Mammary epithelial cell (primary cell): ENCODE measurements at regions of chr1 and their contacts with region 1.

Region 1: DNA sequence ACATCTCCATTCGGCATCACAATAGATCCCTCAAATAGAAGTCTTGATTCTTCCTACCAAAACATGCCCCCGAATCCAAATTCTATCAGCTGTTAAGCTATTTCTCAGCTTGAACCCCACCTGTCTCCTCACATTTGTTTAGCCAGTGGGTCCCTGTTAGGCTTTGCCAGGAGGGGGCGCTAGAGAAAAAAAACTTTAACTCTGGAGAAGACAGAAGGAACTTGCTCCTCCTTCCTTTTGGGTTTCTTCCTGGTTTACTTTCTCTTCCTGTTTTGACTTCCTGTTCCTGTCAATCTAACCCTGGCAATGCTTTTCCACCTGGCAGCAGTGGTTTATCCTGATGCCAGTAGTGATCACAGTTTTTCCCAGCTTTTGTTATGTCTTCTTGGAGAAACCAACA is 95.6 kb upstream of the KCNK1 start:
- DNase-seq: peak; percentile 54
- H3K4me3 ChIP-seq: no peak overlapping the region
- H3K27ac ChIP-seq: no peak overlapping the region
- H3K4me1 ChIP-seq: peaks cover 22% of the 10 kb centered on the region
- H3K27me3 ChIP-seq: peaks cover 2% of the 10 kb centered on the region
- CTCF ChIP-seq: peak; percentile 67 to 74

Region 2: GRCh38 chr1:233543340-233544255 is 25.2 kb after region 1 on chr1:
- CTCF ChIA-PET with region 1: interaction called, 4 read pairs
- dilution Hi-C with region 1: no loop called
- in situ Hi-C with region 1: no loop called
- intact Hi-C with region 1: loop called (anchors 1 kb)
- DNase-seq: peak; percentile 98
- H3K4me3 ChIP-seq: peak overlapping the region in 1 of 3 experiments; percentile 30
- H3K27ac ChIP-seq: peak overlapping the region; percentile 85
- H3K4me1 ChIP-seq: peaks cover 23% of the 10 kb centered on the region
- H3K27me3 ChIP-seq: no peaks in the 10 kb centered on the region
- CTCF ChIP-seq: no peak

Region 3: GRCh38 chr1:233613252-233614174 is 95.2 kb after region 1 on chr1 and contains the start of gene KCNK1:
- CTCF ChIA-PET with region 1: no interaction called
- dilution Hi-C with region 1: no loop called
- in situ Hi-C with region 1: no loop called
- intact Hi-C with region 1: loop called (anchors 2 kb)
- DNase-seq: peak; percentile 90
- H3K4me3 ChIP-seq: peak within 1 kb of the TSS; percentile 66 to 97 (median 83)
- H3K27ac ChIP-seq: peak within 1 kb of the TSS; percentile 87
- H3K4me1 ChIP-seq: peaks cover 6% of the 10 kb centered on the region
- H3K27me3 ChIP-seq: no peaks in the 10 kb centered on the region
- CTCF ChIP-seq: no peak
- total RNA-seq, gene KCNK1: 9.0 to 20.6 TPM